Activated CD4-positive, alpha-beta memory T cell treated with anti-CD3 and anti-CD28 coated beads for 36 hours (primary cell): ENCODE measurements at regions of chr3 and their contacts with region 1.

Region 1: GRCh38 chr3:58482917-58483636 is 8.8 kb upstream of the KCTD6 start:
- DNase-seq: no peak
- H3K4me3 Mint-ChIP-seq: no peak overlapping the region
- H3K27ac Mint-ChIP-seq: no peak overlapping the region
- H3K4me1 Mint-ChIP-seq: peaks cover 4% of the 10 kb centered on the region
- H3K27me3 Mint-ChIP-seq: no peaks in the 10 kb centered on the region

Region 2: GRCh38 chr3:58471025-58471887 is 11.8 kb before region 1 on chr3:
- CTCF ChIA-PET with region 1: no interaction called
- POLR2A ChIA-PET with region 1: no interaction called
- intact Hi-C with region 1: loop called (anchors 1 kb)
- DNase-seq: peak; percentile 80
- H3K4me3 Mint-ChIP-seq: no peak overlapping the region
- H3K27ac Mint-ChIP-seq: peak overlapping the region; percentile 86
- H3K4me1 Mint-ChIP-seq: peaks cover 34% of the 10 kb centered on the region
- H3K27me3 Mint-ChIP-seq: no peaks in the 10 kb centered on the region